ENCODE measurements at regions of chr22 and their contacts with region 1.

Region 1: DNA sequence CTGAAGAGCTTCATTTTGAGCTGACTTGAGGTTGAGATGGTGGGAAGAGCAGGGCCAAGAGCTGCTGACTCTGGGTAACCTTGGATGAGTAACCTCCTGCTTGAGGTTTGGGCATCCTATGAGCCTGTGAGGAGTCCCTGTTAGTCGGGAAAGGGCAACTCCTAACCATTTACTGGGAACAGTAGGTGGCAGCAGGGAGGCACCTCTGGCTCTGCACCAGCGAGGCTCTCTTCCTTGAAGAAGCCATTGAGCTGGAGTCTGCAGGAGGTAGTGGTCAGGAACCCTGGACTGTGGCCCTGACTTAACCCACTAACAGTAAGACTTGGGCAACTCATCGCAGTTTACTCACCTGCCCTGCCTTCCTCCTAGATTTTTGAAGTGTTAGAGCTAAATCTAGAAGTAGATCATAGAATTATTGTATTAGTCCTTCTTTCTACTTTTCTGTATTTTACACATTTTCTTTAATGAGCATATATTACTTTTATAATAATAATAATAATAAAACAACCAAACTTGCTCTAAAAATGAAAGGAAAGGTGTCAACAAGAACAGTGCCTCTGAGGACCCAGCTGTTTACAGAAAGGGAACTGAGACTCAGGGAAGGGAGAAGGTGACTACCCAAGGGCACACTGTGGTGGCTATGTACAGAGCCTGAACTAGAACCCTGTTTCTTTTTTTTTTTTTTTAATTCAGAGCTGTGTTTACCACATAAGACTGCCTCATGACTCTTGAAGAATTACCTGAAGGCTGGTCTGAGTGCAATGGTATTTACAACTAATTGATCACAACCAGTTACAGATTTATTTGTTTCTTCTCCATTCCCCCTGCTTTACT is 47.5 kb downstream of the MEI1 start:
- DNase-seq: peak; percentile 42
- H3K4me3 ChIP-seq: no peak overlapping the region
- CTCF ChIP-seq: peak; percentile 91

Region 2: GRCh38 chr22:41425660-41426365 is 321.0 kb before region 1 on chr22:
- CTCF ChIA-PET with region 1: no interaction called
- POLR2A ChIA-PET with region 1: no interaction called
- DNase-seq: no peak
- H3K4me3 ChIP-seq: no peak overlapping the region
- CTCF ChIP-seq: no peak

Region 3: GRCh38 chr22:41613456-41613855 is 133.3 kb before region 1 on chr22:
- CTCF ChIA-PET with region 1: no interaction called
- POLR2A ChIA-PET with region 1: no interaction called
- DNase-seq: no peak
- H3K4me3 ChIP-seq: no peak overlapping the region
- CTCF ChIP-seq: no peak

Region 4: DNA sequence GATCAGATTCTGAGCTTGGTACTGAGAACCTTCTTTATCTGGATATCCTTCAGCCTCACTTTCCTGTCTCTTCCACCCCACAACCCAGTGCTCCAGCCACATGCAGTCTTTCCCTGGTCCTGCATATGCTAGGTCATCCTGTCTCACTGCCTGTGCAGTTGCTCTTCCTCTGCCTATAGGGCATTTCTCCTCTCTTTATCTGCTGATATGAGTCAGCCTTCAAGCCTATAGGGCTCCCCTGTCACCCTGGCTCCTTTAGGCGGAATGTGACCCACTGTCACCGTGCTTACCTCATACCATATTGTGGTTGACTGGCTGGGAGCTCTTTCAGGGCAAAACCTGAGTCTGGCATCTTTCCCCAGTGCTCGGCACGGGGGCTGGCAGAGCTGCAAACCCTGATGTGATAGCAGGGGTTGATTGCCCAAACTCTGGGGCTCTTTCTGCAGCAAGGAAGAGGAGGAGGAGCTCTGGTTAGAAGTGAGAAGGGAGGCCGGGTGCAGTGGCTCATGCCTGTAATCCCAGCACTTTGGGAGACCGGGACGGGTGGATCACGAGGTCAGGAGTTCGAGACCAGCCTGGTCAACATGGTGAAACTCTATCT is 21.2 kb before region 1 on chr22:
- CTCF ChIA-PET with region 1: interaction called, 23 read pairs
- POLR2A ChIA-PET with region 1: no interaction called
- DNase-seq: no peak
- H3K4me3 ChIP-seq: no peak overlapping the region
- CTCF ChIP-seq: no peak

Region 5: GRCh38 chr22:41757502-41757901 is 10.7 kb after region 1 on chr22:
- CTCF ChIA-PET with region 1: interaction called, 33 read pairs
- POLR2A ChIA-PET with region 1: no interaction called
- DNase-seq: no peak
- H3K4me3 ChIP-seq: no peak overlapping the region
- CTCF ChIP-seq: no peak

Region 6: DNA sequence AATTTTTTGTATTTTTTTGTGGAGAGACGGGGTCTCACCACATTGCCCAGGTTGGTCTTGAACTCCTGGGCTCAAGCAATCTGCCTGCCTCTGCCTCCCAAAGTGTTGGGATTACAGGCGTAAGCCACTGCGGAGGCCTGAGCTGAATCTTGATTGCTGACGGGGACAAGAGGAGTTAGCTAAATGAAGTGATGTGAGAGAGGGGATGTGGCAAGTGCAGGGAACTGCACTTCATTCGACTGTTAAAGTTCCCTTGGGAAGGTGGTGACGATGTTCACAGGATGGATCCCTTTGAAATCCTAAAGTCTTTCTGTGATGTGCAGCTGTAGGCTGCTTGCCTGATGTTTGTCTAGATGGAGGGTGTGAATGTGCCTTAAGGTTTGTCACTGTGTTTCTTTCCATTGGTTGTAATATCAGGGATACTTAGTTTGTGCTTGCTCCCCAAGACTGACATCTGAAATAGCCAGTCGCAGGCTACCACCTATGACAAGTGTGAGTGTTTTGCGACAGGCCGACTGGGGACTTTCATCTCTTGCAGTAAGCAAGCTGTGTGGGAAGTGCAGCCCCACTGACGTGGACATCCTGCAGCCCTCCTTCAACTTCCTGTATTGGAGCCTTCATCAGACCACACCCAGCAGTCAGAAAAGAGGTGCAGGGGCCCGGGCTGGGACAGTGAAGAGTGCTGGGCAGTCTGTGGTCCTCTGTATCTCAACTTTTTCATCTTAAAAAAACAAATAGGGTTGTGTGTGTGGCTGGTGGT is 34.1 kb after region 1 on chr22:
- CTCF ChIA-PET with region 1: interaction called, 15 read pairs
- POLR2A ChIA-PET with region 1: no interaction called
- DNase-seq: no peak
- H3K4me3 ChIP-seq: no peak overlapping the region
- CTCF ChIP-seq: no peak

Region 7: GRCh38 chr22:41847300-41847699 is 100.5 kb after region 1 on chr22:
- CTCF ChIA-PET with region 1: no interaction called
- POLR2A ChIA-PET with region 1: no interaction called
- DNase-seq: no peak
- H3K4me3 ChIP-seq: no peak overlapping the region
- CTCF ChIP-seq: no peak

Region 8: GRCh38 chr22:41857155-41857859 is 110.5 kb after region 1 on chr22:
- CTCF ChIA-PET with region 1: interaction called, 47 read pairs
- POLR2A ChIA-PET with region 1: no interaction called
- DNase-seq: no peak
- H3K4me3 ChIP-seq: no peak overlapping the region
- CTCF ChIP-seq: peak; percentile 51

Region 9: DNA sequence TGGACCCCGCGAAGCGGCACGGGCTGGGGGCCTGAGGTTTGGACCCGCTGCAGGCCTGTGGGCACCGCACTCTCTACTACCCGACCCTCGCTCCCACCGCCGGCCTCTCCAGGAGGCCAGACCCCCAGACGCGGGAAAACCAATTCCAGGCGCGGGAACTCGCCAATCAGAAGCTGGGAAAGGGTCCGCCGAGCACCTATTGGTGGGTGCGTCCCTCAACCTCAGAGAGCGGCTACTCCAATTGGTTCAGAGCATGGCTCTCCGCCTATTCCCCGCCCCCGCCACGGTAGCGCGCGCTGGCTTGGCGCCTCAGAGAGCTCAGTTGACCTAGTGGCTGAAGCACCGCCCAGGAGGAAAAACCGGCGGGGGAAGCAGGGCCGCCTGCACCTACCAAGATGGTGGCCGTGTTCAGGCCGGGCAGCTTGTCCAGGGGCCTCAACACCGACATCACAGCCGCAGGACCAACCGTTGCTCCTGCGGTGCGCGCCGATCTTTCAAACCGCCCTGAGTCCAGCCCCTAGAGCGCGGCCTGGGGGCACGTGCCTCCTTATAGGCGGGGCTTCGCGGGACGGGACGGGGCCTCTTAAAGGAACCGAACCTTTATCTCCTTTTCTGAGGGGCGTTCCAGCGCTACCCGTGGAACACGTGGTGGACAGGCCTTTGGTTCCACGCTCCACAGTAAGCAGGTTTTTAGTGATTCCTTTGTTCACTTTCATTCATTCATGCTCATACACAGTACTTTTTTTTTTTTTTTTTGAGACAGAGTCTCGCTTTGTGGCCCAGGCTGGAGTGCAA is 200.0 kb after region 1 on chr22 and contains the start of gene CENPM:
- CTCF ChIA-PET with region 1: interaction called, 251 read pairs
- POLR2A ChIA-PET with region 1: no interaction called
- DNase-seq: no peak
- H3K4me3 ChIP-seq: peak within 1 kb of the TSS; percentile 88
- CTCF ChIP-seq: no peak